ENCODE measurements at regions of chr16 and their contacts with region 1.

Region 1: GRCh38 chr16:23435500-23435899 is 17.5 kb downstream of the COG7 start:
- DNase-seq: no peak

Region 2: DNA sequence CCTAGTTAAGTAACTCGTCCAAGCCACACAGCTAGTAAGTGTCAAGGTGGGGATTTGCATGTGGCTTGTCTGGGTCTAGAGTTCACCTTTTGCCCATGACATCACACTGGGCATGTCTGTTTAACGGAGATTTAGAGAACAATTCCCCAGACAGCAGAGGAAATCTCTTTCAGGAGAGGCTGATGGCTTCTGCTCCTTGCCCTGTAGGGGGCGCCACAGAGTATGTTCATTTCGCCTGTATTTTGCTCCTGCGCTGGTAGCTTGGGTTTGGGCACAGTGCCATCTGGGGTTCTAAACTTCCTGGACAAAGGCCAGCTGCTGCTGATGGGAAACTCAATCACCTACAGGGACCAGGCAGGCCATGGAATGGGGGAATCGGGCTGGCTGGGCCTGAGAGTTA is 1751.3 kb before region 1 on chr16:
- intact Hi-C with region 1: loop called in 1 of 2 experiments (anchors 5 kb)
- DNase-seq: no peak

Region 3: DNA sequence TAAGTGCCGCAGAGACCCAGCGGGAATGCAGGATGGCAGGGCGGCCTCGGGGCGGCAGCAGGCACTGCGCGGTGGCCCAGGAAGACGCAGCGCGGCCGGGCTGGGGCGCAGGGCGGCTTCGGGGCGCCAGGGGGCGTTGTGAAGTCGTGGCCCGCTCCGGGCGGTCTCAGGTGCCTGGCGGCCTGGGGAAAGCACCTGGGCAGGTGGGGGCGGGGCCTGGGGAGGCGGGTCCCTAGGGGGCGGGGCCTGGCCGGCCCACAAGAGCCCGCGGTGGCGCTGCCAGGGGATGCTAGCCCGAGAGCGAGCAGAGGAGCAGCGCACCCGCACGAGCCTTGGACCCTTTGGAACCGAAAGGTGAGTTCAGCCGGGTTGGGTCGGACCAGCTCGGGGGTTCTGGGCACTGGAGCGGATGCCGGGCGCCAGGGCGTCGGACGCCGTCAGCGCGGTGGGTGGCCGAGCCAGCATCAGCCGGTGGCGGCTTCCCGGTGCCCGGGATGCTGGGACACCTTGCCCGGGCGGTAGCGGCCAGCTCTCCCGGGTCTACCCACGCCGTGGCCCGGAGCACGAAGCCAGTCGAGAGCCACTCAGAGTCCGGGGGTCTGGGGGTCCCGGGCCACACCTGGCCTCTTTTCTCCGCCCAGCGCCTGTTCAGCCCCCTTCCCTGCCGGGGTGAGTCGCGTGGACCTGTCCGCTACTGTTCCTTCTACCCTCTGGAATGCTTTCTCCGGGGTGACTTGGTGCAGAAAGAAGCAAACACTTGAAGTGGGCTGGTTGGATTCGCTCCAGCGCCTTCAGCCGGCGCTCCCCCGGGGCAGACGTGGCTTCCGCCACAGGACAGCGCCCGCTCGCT is 252.8 kb before region 1 on chr16 and contains the start of gene SCNN1G:
- intact Hi-C with region 1: loop called (anchors 5 kb)
- DNase-seq: peak; percentile 88
- total RNA-seq, gene SCNN1G: not detected

Region 4: DNA sequence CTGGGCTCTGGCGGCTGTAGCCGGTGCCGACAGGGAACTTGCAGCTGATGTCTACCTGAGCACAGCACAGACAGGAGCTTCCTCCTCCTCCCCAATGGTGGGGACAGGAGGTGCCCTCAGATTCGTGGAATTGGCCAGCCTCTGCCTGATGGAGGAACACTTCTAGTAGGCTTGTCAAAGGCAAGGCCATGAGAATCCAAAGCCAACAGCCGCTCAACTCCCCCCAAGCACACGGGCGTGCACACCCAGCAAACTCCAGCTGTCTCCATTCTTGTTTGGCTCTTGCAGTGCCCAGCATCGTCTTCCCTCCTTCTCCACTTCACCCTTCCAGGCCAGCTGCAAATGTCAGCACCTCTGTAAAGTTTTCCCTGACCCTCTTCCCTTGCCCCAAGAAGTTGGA is 217.9 kb before region 1 on chr16:
- intact Hi-C with region 1: no loop called
- DNase-seq: no peak

Measured in posterior vena cava (tissue), 2 donors.